H1 (cell line): ENCODE measurements at regions of chrX and their contacts with region 1.

Region 1: DNA sequence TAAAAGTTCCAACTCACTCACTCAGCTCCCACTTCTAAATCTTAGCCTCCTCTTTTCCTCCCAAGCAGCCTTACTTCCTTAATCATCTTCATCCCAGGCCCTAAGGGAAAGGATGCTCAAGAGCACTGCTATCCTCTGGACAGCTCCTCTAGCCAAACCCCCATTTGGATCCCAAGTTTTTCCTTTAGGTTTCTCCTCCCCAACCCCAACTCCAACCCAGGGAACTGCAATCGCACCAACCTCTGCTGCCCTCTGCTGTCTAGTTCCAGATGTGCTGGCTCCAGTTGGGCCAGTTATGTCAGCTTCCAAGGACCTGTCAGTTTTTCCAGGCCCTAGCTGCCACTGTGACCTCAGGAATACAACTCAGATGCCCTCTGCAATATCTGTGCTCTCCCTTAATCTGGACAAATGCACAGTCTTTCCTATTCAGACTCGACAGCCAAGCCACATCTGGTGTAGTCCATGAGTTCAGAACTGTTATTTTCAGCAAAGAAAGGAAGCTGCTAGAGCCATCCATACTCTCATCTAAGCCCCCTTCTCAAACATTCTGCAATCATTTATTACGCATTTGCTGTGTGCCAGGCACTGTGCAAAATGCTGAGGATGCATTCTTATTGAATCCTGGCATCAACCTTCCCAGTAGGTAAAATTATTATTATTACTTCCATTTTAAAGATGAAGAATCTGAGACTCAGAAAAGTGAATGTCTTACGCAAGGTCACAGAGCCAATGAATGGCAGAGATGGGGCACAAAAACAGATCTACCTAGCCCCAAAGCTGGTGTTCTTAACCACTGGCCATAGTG is 12.3 kb upstream of the XPNPEP2 start:
- DNase-seq: peak; percentile 34 to 75
- H3K4me3 ChIP-seq: no peak overlapping the region
- H3K27ac ChIP-seq: no peak overlapping the region
- H3K4me1 ChIP-seq: peaks cover 0 to 2% (median 0%) of the 10 kb centered on the region in 4 experiments; a peak in 2 of 7 replicates
- H3K27me3 ChIP-seq: no peaks in the 10 kb centered on the region; a peak in 1 of 7 replicates
- CTCF ChIP-seq: peak; percentile 70 to 93 (median 82)
- EP300 ChIP-seq: no peak
- POLR2A ChIP-seq: no peak
- RAD21 ChIP-seq: peak; percentile 94 to 98

Region 2: GRCh38 chrX:129606918-129607317 is 119.6 kb before region 1 on chrX:
- CTCF ChIA-PET with region 1: interaction called, 51 read pairs
- POLR2A ChIA-PET with region 1: no interaction called
- DNase-seq: peak in 1 of 2 experiments; percentile 72
- H3K4me3 ChIP-seq: no peak overlapping the region
- H3K27ac ChIP-seq: no peak overlapping the region
- H3K4me1 ChIP-seq: no peaks in the 10 kb centered on the region; a peak in 2 of 7 replicates
- H3K27me3 ChIP-seq: 0 out of 7 replicates have a peak, but pooled peaks cover 0 to 2% (median 0%) of the 10 kb centered on the region in 4 experiments
- CTCF ChIP-seq: peak; percentile 12 to 67 (median 65)
- EP300 ChIP-seq: no peak
- POLR2A ChIP-seq: no peak
- RAD21 ChIP-seq: peak; percentile 78 to 85

Region 3: DNA sequence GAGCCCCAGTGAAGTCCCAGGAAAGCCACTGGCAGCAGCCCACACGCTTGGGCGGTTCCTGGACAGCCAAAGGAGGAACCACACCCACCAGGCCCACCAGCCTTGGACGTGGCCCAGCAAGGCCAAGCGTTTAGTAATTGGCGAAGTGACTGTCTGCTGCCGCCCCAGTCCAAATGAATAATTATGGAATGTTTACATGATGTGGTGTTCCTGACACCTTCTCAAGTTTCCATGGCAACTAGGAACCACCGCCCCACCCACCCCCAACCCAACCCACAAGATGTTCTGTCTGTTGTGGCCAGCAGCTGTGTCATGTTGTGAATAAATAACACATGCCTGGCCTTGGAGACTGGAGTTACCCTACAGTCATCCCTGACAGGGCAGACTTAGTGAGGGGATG is 94.1 kb before region 1 on chrX:
- CTCF ChIA-PET with region 1: interaction called, 144 read pairs
- POLR2A ChIA-PET with region 1: no interaction called
- DNase-seq: no peak
- H3K4me3 ChIP-seq: no peak overlapping the region
- H3K27ac ChIP-seq: no peak overlapping the region
- H3K4me1 ChIP-seq: no peaks in the 10 kb centered on the region
- H3K27me3 ChIP-seq: no peaks in the 10 kb centered on the region
- CTCF ChIP-seq: no peak
- EP300 ChIP-seq: no peak
- POLR2A ChIP-seq: no peak
- RAD21 ChIP-seq: no peak

Region 4: DNA sequence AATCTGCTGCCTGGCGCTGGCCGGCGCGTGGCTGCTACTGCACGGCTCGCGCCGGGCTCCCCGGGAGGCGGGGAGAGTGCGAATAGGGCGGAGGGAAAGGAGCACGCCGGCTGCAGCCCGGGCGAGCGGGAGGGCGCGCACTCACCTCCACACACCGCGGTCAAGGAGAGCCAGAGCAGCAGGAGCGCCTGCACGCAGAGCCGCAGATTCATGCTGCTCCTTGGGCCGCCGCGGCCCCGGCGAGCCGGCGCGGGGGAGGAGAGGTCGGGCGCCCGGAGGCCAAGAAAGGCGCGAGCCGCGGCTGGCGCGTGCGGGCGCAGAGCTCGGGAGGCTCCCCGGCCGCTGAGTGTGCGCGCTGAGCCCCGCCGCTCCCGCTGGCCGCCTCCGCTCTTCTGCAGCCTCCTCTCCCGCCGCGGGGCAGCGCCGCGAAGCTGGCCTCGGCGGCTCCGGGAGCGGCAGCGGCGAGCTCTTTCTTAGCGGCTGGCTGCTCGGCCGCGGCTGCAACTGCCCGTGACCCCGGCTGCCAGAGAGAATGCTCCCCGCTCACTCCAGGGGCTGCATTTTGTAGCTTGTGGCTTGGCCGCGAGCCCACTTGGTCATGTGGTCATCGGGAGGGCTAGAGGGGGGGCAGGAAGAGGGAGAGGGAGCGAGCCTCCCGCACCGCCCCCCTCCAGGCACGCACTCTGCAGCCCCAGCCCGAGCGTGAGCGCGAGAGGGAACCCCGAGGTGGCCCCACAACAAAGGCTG is 71.9 kb before region 1 on chrX and contains the start of gene APLN:
- CTCF ChIA-PET with region 1: interaction called, 24 read pairs
- POLR2A ChIA-PET with region 1: no interaction called
- DNase-seq: peak in 1 of 2 experiments; percentile 50
- H3K4me3 ChIP-seq: peak within 1 kb of the TSS; percentile 27 to 64 (median 45)
- H3K27ac ChIP-seq: no peak within 1 kb of the TSS
- H3K4me1 ChIP-seq: peaks cover 3 to 12% (median 6%) of the 10 kb centered on the region in 4 experiments; a peak in 6 of 7 replicates
- H3K27me3 ChIP-seq: peaks cover 14 to 62% (median 43%) of the 10 kb centered on the region in 4 experiments
- CTCF ChIP-seq: no peak
- EP300 ChIP-seq: no peak
- POLR2A ChIP-seq: no peak
- RAD21 ChIP-seq: no peak
- total RNA-seq, gene APLN: 1.1 TPM in 2 replicates

Region 5: DNA sequence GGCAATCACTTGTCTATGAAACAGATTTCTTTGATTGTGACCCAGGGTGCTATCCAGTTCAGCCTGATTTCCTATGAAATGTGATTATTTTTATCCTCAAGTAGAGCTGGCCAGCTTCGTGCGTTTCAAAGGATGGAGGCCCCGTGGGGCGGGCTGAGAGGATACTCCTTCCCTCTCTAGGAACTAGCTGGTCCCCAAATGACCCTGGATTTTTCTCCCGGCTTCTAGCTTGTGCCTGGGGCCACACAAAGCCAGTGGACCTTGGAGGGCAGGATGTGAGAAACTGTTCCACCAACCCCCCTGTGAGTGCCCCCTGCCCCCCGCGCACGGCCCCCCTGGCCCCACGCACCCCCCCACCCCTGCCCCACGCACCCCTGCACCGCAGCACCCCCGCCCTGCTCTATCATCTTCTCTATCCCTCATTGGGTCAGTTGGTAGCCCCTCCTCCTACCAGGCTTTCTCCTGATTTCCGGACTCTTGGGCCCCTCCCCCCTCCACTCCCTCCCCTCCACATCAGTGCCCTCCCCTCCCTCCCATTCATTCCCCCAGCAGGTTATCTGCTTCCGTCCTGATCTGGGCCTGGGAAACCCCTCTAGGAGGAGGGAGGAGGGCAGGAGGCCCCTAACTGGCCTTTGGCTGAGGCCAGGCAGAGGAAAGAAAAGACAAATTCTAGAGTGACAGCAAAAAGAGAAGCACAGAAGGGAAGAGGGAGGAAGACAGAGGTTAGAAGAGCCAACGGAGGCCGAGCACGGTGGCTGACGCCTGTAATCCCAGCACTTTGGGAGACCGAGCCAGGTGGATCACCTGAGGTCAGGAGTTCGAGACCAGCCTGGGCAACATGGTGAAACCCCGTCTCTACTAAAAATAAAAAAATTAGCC is 15.6 kb after region 1 on chrX:
- CTCF ChIA-PET with region 1: interaction called, 11 read pairs
- POLR2A ChIA-PET with region 1: no interaction called
- DNase-seq: peak in 1 of 2 experiments; percentile 54
- H3K4me3 ChIP-seq: no peak overlapping the region
- H3K27ac ChIP-seq: no peak overlapping the region
- H3K4me1 ChIP-seq: peaks cover 0 to 12% (median 4%) of the 10 kb centered on the region in 4 experiments; a peak in 4 of 7 replicates
- H3K27me3 ChIP-seq: no peaks in the 10 kb centered on the region; a peak in 1 of 7 replicates
- CTCF ChIP-seq: no peak
- EP300 ChIP-seq: peak in 1 of 2 experiments; percentile 40; a peak in 1 of 3 replicates
- POLR2A ChIP-seq: no peak
- RAD21 ChIP-seq: no peak